ENCODE measurements at regions of chr7 and their contacts with region 1.

Region 1: GRCh38 chr7:54773472-54774399 is 14.7 kb upstream of the SEC61G start:
- DNase-seq: peak; percentile 80
- H3K4me3 ChIP-seq: peak overlapping the region; percentile 53 to 57
- H3K27ac ChIP-seq: peak overlapping the region; percentile 41 to 49; a peak in 2 of 4 replicates
- H3K4me1 ChIP-seq: 0 out of 4 replicates have a peak, but pooled peaks cover 0 to 6% of the 10 kb centered on the region in 2 experiments
- H3K27me3 ChIP-seq: no peaks in the 10 kb centered on the region
- CTCF ChIP-seq: peak; percentile 99
- EP300 ChIP-seq: no peak
- RAD21 ChIP-seq: peak; percentile 99

Region 2: DNA sequence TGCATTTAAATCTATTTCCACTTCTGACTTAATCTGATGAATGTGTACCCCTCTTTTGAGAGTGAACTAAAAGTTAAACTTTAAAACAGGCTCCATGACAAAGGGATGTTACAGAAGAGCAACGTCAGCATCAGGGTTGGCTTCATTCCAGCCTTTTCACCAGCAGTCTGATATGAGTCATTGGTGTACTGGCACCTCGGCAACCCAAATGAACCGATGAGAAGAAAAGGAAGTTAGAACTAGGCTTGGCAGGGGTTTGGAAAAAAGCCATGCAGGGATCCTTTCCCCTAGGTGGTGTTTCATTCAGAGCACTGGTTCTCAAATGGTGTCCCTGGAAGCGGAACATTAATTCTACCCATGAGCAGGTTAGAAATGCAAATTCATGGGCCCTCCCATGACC is 68.3 kb before region 1 on chr7:
- CTCF ChIA-PET with region 1: no interaction called
- POLR2A ChIA-PET with region 1: no interaction called
- DNase-seq: no peak
- H3K4me3 ChIP-seq: no peak overlapping the region
- H3K27ac ChIP-seq: no peak overlapping the region
- H3K4me1 ChIP-seq: no peaks in the 10 kb centered on the region
- H3K27me3 ChIP-seq: no peaks in the 10 kb centered on the region
- CTCF ChIP-seq: no peak
- EP300 ChIP-seq: no peak
- RAD21 ChIP-seq: no peak

Region 3: GRCh38 chr7:54802841-54803240 is 29.1 kb after region 1 on chr7:
- CTCF ChIA-PET with region 1: interaction called, 17 read pairs
- POLR2A ChIA-PET with region 1: no interaction called
- DNase-seq: no peak
- H3K4me3 ChIP-seq: no peak overlapping the region
- H3K27ac ChIP-seq: no peak overlapping the region
- H3K4me1 ChIP-seq: 0 out of 4 replicates have a peak, but pooled peaks cover 0 to 7% of the 10 kb centered on the region in 2 experiments
- H3K27me3 ChIP-seq: no peaks in the 10 kb centered on the region
- CTCF ChIP-seq: no peak
- EP300 ChIP-seq: 0 out of 4 replicates have a peak, but pooled peaks of 1 of the 2 experiments have one; percentile 39
- RAD21 ChIP-seq: no peak

Region 4: GRCh38 chr7:54888734-54889082 is 115.0 kb after region 1 on chr7:
- CTCF ChIA-PET with region 1: no interaction called
- POLR2A ChIA-PET with region 1: no interaction called
- DNase-seq: peak; percentile 63
- H3K4me3 ChIP-seq: peak overlapping the region; percentile 36 to 52; a peak in 3 of 4 replicates
- H3K27ac ChIP-seq: no peak overlapping the region
- H3K4me1 ChIP-seq: peaks cover 0 to 10% of the 10 kb centered on the region in 2 experiments; a peak in 2 of 4 replicates
- H3K27me3 ChIP-seq: no peaks in the 10 kb centered on the region
- CTCF ChIP-seq: no peak
- EP300 ChIP-seq: no peak
- RAD21 ChIP-seq: no peak

Region 5: DNA sequence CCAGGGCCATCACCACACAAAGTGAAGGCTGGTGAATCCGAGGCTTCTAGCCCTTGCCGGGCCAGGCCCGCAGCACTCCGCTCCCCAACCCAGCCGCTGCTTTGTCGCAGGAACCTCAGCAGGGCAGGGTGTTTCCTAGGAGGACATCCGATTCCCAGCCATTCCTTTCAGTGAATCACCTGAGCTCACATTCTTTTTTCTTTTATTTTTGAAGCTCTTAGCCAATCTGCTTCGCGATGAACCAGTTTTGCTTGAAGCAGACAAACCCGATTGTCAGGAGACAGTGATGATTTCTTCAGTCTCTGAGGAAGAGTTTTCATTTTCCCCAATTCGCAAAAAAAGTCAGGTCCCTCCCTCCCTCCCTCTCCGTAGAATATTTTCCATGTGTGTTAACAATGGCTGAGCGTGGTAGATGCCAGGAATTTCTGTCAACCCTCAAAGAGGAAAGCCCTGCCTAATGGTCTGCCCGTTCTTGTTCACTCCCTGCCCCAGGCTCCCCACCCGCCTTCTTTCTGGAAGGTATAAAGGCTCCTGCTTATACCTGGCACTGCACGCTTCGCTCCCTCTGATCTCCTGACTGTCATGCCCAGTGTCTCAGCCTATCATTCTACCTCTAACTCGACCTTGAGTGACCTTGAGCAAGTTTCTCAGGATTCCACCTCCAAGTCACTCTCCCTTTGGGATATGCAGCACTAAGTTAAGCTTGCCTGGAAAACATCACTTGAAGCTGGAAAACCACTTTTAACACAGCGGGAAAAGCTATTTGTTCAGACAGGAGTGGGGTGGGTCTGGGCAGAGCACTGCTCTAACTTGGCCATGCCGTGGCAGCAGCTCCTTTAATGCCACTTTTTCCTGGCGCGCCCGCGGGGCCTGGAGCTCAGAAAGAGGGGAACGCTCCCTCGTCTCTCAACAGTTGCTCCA is 280.2 kb after region 1 on chr7:
- CTCF ChIA-PET with region 1: interaction called, 10 read pairs
- POLR2A ChIA-PET with region 1: no interaction called
- DNase-seq: no peak
- H3K4me3 ChIP-seq: no peak overlapping the region
- H3K27ac ChIP-seq: peak overlapping the region in 1 of 2 experiments; percentile 78; a peak in 2 of 4 replicates
- H3K4me1 ChIP-seq: peaks cover 0 to 39% of the 10 kb centered on the region in 2 experiments; a peak in 2 of 4 replicates
- H3K27me3 ChIP-seq: no peaks in the 10 kb centered on the region
- CTCF ChIP-seq: no peak
- EP300 ChIP-seq: no peak
- RAD21 ChIP-seq: no peak

Region 6: DNA sequence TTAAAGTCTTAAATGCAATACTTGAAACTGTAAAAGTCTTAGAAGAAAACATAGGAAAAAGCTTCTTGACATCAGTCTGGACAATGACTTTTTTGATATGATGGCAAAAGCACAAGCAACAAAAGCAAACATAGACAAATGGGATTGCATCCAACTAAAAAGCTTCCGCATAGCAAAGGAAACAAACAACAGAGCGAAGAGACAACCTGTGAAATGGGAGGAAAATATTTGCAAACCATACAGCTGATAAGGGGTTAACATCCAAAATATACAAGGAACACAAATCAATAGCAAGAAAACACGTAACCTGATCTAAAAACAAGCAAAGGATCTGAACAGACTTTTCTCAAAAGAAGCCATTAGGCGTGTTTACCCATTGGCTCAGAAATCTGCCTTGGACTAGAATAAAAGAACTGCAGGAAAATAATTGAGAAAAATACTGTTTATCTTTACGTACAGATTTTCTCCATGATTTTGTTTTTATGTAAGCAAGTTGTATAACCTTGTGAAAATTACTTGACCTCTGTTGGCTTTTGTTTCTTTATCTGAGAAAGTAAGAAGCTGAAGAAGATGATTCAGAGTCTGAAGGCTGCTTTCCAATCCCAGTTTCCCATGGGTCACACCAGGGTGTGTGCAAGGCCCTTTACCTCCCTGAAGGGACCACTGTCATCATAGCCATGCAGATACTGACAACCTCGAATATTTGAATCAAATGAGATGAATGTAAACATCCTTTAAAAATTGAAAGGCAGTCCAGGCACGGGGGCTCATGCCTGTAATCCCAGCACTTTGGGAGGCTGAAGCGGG is 492.3 kb after region 1 on chr7:
- CTCF ChIA-PET with region 1: interaction called, 26 read pairs
- POLR2A ChIA-PET with region 1: no interaction called
- DNase-seq: no peak
- H3K4me3 ChIP-seq: no peak overlapping the region
- H3K27ac ChIP-seq: no peak overlapping the region
- H3K4me1 ChIP-seq: no peaks in the 10 kb centered on the region
- H3K27me3 ChIP-seq: peaks cover 5% of the 10 kb centered on the region; the same call in 1 of the 2 replicates
- CTCF ChIP-seq: no peak
- EP300 ChIP-seq: no peak
- RAD21 ChIP-seq: no peak

Region 7: DNA sequence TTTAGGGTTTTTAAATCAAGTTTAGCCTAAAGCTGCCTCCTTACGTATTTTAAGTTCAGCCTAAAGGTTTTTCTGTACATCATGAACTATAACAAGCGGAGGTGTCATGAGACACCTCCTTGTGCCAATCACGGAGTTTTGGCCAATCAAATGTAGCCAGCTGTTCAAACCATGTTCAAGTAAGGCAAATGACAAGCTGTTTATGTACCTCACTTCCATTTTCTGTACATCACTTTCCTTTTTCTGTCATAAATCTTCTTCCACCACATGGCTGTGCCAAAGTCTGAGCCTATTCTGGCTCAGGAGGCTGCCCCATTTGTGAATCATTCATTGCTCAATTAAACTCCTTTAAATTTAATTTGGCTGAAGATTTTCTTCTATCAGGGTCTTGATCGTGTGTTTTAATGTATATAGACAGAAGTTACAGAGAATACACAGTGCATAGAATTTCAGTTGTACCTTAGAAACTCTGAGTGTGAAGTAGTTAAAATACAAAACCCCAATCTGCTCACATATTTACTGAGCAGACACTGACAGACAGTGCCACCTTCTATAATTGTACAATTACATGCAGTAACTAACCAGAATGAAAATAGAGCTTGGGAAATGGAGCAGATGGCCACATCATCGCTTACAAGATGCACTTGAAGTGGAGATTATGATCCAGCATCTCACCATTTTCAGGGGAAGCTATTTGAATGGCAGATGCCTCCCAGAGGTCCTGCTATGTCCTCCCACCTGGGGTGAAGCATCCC is 514.5 kb after region 1 on chr7:
- CTCF ChIA-PET with region 1: interaction called, 18 read pairs
- POLR2A ChIA-PET with region 1: no interaction called
- DNase-seq: no peak
- H3K4me3 ChIP-seq: no peak overlapping the region
- H3K27ac ChIP-seq: no peak overlapping the region
- H3K4me1 ChIP-seq: no peaks in the 10 kb centered on the region; a peak in 1 of 4 replicates
- H3K27me3 ChIP-seq: 0 out of 2 replicates have a peak, but pooled peaks cover 4% of the 10 kb centered on the region
- CTCF ChIP-seq: peak; percentile 38
- EP300 ChIP-seq: no peak
- RAD21 ChIP-seq: peak; percentile 37

Region 8: DNA sequence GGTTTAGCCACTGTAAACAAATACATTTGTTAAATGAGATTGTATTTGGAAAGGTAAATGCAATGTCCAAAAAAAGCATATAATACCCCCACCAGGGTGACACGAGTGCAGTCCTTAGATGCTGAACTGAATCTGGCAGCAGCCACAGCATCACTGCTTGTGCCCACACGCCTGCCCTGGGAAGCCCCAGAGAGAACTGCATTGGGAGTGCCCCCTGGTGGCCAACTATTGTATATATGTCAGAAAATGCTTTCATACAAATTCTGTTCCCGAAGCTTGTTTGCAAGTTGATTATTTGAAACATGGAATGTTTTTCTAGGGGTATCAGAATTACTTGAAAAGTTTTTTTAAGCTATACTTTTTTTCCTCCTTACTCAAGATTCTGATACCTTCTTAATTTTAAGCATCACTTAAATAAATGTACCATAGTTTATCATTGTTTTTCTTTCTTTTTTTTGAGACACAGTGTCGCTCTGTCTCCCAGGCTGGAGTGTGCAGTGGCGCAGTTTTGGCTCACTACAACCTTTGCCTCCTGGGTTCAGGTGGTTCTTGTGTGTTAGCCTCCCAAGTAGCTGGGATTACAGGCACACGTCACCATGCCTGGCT is 641.5 kb after region 1 on chr7:
- CTCF ChIA-PET with region 1: interaction called, 20 read pairs
- POLR2A ChIA-PET with region 1: no interaction called
- DNase-seq: peak; percentile 88
- H3K4me3 ChIP-seq: no peak overlapping the region
- H3K27ac ChIP-seq: no peak overlapping the region
- H3K4me1 ChIP-seq: peaks cover 0 to 5% of the 10 kb centered on the region in 2 experiments; a peak in 1 of 4 replicates
- H3K27me3 ChIP-seq: no peaks in the 10 kb centered on the region
- CTCF ChIP-seq: peak; percentile 96
- EP300 ChIP-seq: no peak
- RAD21 ChIP-seq: peak; percentile 84

Measured in SK-N-SH (cell line).